Motor neuron (in vitro differentiated cells): ENCODE measurements at regions of chr12 and their contacts with region 1.

Region 1: DNA sequence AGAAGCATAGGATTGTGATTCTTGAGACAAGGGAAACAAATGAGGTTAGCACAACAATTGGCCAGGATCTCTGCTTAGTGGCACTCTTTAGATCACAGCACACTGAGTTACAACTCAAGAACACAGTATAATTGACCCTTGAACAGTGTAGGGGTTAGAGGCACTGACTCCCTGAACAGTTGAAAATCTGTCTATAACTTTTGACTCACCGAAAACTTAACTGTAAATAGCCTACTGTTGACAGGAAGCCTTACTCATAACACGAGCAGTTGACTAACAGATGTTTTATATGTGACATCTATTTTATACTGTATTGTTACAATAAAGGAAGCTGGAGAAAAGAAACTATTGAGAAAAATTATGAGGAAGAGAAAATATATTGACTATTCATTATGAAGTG is 296.1 kb downstream of the RERGL start:
- ATAC-seq: peak in 1 of 8 experiments; percentile 32
- H3K4me3 ChIP-seq: no peak overlapping the region
- H3K27ac ChIP-seq: no peak overlapping the region
- H3K4me1 ChIP-seq: no peaks in the 10 kb centered on the region

Region 2: GRCh38 chr12:17588968-17589367 is 204.9 kb before region 1 on chr12:
- in situ Hi-C with region 1: no loop called
- ATAC-seq: peak in 3 of 8 experiments; percentile 19 to 41 (median 26)
- H3K4me3 ChIP-seq: no peak overlapping the region
- H3K27ac ChIP-seq: no peak overlapping the region
- H3K4me1 ChIP-seq: peaks cover 4 to 17% of the 10 kb centered on the region in 2 donors

Region 3: DNA sequence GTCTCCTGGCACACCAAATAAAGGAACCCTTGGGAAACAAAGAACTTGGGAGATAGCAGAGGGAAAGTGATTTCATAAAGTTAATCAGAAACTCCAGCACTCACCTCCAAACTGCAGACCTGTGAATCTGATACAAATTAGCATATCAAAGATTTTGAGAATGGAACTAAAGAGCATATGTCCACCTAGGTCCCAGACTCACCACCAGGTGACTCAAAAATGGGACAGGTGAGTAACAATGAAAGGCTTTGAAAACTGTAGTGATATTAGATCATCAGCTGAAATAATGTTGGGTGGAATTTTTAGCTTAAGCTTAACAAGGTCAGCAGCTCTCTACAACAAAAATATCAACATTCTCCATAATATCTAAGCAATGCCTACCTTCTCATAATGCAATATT is 81.4 kb after region 1 on chr12:
- in situ Hi-C with region 1: loop called in 1 of 9 experiments (anchors 25 kb)
- ATAC-seq: no peak
- H3K4me3 ChIP-seq: no peak overlapping the region
- H3K27ac ChIP-seq: no peak overlapping the region
- H3K4me1 ChIP-seq: no peaks in the 10 kb centered on the region